ENCODE measurements at regions of chr13 and their contacts with region 1.

Region 1: DNA sequence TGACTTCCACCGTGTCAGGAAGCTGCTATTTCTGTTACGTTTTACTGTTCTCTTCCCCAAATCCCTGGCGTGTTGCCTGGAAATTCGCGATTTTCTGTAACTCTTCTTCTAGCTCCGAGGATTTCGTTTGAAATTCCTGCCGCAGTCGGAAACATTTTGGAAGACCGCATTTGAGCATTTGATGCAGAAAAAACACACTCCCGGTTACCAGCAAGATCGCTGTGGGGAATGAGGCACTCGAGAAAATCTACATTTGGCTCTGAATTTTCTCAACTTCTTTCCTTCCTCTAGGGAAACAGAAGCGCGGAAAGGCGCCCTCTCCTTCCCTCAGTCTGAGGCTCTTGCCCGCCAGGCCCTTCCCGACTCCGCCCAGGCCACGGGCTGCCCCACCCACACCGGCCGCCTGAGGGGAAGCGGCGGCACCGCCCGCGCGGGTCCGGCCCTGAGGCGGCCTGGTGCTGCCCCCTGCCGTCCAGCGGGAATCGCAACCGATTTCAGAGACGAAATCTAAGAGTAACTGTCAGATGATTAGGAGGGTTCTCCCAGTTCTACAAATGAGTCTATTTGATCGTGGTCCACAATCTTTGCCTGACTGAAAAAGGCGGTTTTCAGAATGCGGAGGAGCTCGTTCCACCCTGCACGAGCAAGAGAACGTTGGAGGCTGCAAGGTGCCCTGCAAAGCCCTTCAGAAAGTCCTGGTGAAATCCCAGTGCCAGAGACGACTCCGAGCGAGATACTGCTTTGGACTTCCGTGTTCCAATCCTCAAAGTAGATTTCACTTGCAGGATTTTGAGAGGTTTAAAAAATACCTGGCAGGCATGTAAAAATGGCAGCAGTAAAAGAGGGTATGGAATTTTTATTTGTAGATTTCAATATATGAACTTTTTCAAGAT is 18.4 kb upstream of the TUBGCP3 start:
- DNase-seq: peak; percentile 70 to 91 (median 84)
- ATAC-seq: peak; percentile 99
- H3K4me3 ChIP-seq: peak overlapping the region; percentile 49 to 53
- H3K4me3 Mint-ChIP-seq: peak overlapping the region; percentile 86
- H3K27ac ChIP-seq: no peak overlapping the region
- H3K27ac Mint-ChIP-seq: no peak overlapping the region
- H3K4me1 ChIP-seq: no peaks in the 10 kb centered on the region
- H3K4me1 Mint-ChIP-seq: peaks cover 8% of the 10 kb centered on the region
- H3K27me3 ChIP-seq: peaks cover 0 to 4% of the 10 kb centered on the region in 2 experiments
- H3K27me3 Mint-ChIP-seq: peaks cover 11% of the 10 kb centered on the region
- CTCF ChIP-seq: peak; percentile 97

Region 2: DNA sequence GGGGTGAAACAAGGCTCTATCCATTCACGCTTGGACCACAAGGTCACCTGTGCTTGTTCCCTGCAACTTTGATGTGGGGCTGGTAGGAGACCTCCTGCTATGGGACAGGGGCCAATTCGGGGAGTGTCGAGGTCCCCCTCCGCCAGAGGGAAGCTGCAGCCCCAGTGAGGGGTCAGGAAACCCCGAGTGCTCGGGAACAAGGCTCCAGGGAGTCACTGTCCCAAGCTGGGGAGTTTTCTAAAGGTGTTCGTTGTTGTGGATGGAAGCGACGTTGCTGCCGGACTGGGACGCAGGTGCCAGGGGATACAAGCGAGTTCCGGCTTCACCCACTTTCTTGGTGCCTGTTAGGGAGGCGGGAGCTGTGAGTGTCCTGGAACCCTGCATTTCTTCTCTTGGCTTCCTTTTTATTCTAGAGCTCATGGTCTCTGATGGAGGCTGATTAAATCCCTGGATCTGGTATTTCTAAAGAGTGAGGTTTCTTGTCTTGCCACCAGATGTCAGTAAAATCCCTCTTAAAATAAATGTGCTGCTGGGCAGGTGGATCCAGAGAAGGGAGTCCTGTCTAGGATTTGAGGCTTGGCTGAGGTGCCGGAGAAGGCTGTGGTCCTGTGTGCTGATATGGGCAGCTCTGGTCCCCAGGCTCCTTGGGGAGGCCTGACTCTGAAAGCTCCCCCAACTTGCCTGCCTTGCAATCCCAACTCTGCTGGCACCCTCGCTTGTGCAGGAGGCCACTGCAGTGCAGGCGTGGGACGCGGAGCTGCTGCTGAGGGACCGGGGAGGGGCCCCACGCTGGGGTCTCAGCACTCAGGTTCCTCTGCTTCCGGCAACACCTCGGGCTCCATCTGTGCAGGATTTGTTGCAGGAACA is 1132.0 kb before region 1 on chr13:
- CTCF ChIA-PET with region 1: interaction called, 8 read pairs
- POLR2A ChIA-PET with region 1: no interaction called
- intact Hi-C with region 1: loop called in 1 of 2 experiments (anchors 1 kb)
- DNase-seq: peak in 2 of 9 experiments; percentile 30 to 40
- ATAC-seq: no peak
- H3K4me3 ChIP-seq: no peak overlapping the region
- H3K4me3 Mint-ChIP-seq: no peak overlapping the region
- H3K27ac ChIP-seq: no peak overlapping the region
- H3K27ac Mint-ChIP-seq: no peak overlapping the region
- H3K4me1 ChIP-seq: no peaks in the 10 kb centered on the region
- H3K4me1 Mint-ChIP-seq: no peaks in the 10 kb centered on the region
- H3K27me3 ChIP-seq: no peaks in the 10 kb centered on the region
- H3K27me3 Mint-ChIP-seq: peaks cover 2% of the 10 kb centered on the region
- CTCF ChIP-seq: no peak

Region 3: GRCh38 chr13:112510002-112510780 is 96.2 kb before region 1 on chr13:
- CTCF ChIA-PET with region 1: no interaction called
- POLR2A ChIA-PET with region 1: no interaction called
- intact Hi-C with region 1: loop called in 1 of 2 experiments (anchors 10 kb)
- DNase-seq: peak in 1 of 9 experiments; percentile 9
- ATAC-seq: no peak
- H3K4me3 ChIP-seq: no peak overlapping the region
- H3K4me3 Mint-ChIP-seq: no peak overlapping the region
- H3K27ac ChIP-seq: no peak overlapping the region
- H3K27ac Mint-ChIP-seq: no peak overlapping the region
- H3K4me1 ChIP-seq: no peaks in the 10 kb centered on the region
- H3K4me1 Mint-ChIP-seq: no peaks in the 10 kb centered on the region
- H3K27me3 ChIP-seq: no peaks in the 10 kb centered on the region
- H3K27me3 Mint-ChIP-seq: no peaks in the 10 kb centered on the region
- CTCF ChIP-seq: no peak

Region 4: DNA sequence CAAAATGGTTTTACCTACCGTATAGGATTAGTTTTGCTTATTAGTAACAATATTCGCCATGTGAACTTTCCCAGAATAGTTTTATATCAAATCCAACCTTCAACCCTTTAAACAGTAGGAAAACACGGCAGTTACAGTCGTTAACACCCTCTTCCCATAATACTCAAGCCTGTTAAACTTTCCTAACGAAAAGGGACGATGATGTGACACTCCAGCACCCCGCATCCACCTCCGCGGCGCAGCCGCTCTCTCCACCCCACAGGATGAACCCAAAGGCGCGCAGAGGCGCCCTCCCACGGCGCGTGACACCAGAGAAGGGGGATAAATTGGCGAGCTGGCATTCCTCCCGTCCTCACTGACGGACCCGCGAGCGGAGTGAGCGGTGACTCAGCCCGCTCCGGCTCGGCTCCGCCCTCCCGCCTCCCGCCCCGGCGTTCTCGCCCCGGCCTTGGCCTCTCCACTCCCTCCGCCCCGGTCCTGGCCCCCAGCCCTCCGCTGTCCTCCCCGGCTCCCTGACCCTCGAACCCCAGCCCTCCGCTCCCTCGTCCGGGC is 19.1 kb before region 1 on chr13:
- CTCF ChIA-PET with region 1: interaction called, 17 read pairs
- POLR2A ChIA-PET with region 1: interaction called, 5 read pairs
- intact Hi-C with region 1: no loop called
- DNase-seq: peak; percentile 9 to 81 (median 68)
- ATAC-seq: peak; percentile 70
- H3K4me3 ChIP-seq: peak overlapping the region; percentile 76 to 83
- H3K4me3 Mint-ChIP-seq: peak overlapping the region; percentile 96
- H3K27ac ChIP-seq: peak overlapping the region; percentile 57 to 58
- H3K27ac Mint-ChIP-seq: peak overlapping the region; percentile 89
- H3K4me1 ChIP-seq: peaks cover 18% of the 10 kb centered on the region
- H3K4me1 Mint-ChIP-seq: peaks cover 44% of the 10 kb centered on the region
- H3K27me3 ChIP-seq: no peaks in the 10 kb centered on the region
- H3K27me3 Mint-ChIP-seq: no peaks in the 10 kb centered on the region
- CTCF ChIP-seq: no peak

Region 5: GRCh38 chr13:112616586-112617362 is 10.4 kb after region 1 on chr13:
- CTCF ChIA-PET with region 1: interaction called, 25 read pairs
- POLR2A ChIA-PET with region 1: no interaction called
- intact Hi-C with region 1: no loop called
- DNase-seq: peak in 3 of 9 experiments; percentile 15 to 33 (median 17)
- ATAC-seq: no peak
- H3K4me3 ChIP-seq: no peak overlapping the region
- H3K4me3 Mint-ChIP-seq: no peak overlapping the region
- H3K27ac ChIP-seq: no peak overlapping the region
- H3K27ac Mint-ChIP-seq: no peak overlapping the region
- H3K4me1 ChIP-seq: no peaks in the 10 kb centered on the region
- H3K4me1 Mint-ChIP-seq: no peaks in the 10 kb centered on the region
- H3K27me3 ChIP-seq: no peaks in the 10 kb centered on the region
- H3K27me3 Mint-ChIP-seq: peaks cover 10% of the 10 kb centered on the region
- CTCF ChIP-seq: peak; percentile 26

Region 6: GRCh38 chr13:112711528-112712265 is 105.3 kb after region 1 on chr13:
- CTCF ChIA-PET with region 1: no interaction called
- POLR2A ChIA-PET with region 1: no interaction called
- intact Hi-C with region 1: no loop called
- DNase-seq: no peak
- ATAC-seq: no peak
- H3K4me3 ChIP-seq: no peak overlapping the region
- H3K4me3 Mint-ChIP-seq: no peak overlapping the region
- H3K27ac ChIP-seq: no peak overlapping the region
- H3K27ac Mint-ChIP-seq: peak overlapping the region; percentile 13
- H3K4me1 ChIP-seq: no peaks in the 10 kb centered on the region
- H3K4me1 Mint-ChIP-seq: peaks cover 3% of the 10 kb centered on the region
- H3K27me3 ChIP-seq: no peaks in the 10 kb centered on the region
- H3K27me3 Mint-ChIP-seq: no peaks in the 10 kb centered on the region
- CTCF ChIP-seq: no peak

Region 7: GRCh38 chr13:112873851-112874750 is 267.7 kb after region 1 on chr13:
- CTCF ChIA-PET with region 1: no interaction called
- POLR2A ChIA-PET with region 1: no interaction called
- intact Hi-C with region 1: no loop called
- DNase-seq: peak in 8 of 9 experiments; percentile 26 to 89 (median 54)
- ATAC-seq: peak; percentile 72
- H3K4me3 ChIP-seq: no peak overlapping the region
- H3K4me3 Mint-ChIP-seq: peak overlapping the region; percentile 29
- H3K27ac ChIP-seq: peak overlapping the region; percentile 37 to 83
- H3K27ac Mint-ChIP-seq: peak overlapping the region; percentile 88
- H3K4me1 ChIP-seq: peaks cover 24% of the 10 kb centered on the region
- H3K4me1 Mint-ChIP-seq: peaks cover 25% of the 10 kb centered on the region
- H3K27me3 ChIP-seq: no peaks in the 10 kb centered on the region
- H3K27me3 Mint-ChIP-seq: no peaks in the 10 kb centered on the region
- CTCF ChIP-seq: peak; percentile 49